Naive thymus-derived CD8-positive, alpha-beta T cell (primary cell): ENCODE measurements at regions of chr15 and their contacts with region 1.

Region 1: DNA sequence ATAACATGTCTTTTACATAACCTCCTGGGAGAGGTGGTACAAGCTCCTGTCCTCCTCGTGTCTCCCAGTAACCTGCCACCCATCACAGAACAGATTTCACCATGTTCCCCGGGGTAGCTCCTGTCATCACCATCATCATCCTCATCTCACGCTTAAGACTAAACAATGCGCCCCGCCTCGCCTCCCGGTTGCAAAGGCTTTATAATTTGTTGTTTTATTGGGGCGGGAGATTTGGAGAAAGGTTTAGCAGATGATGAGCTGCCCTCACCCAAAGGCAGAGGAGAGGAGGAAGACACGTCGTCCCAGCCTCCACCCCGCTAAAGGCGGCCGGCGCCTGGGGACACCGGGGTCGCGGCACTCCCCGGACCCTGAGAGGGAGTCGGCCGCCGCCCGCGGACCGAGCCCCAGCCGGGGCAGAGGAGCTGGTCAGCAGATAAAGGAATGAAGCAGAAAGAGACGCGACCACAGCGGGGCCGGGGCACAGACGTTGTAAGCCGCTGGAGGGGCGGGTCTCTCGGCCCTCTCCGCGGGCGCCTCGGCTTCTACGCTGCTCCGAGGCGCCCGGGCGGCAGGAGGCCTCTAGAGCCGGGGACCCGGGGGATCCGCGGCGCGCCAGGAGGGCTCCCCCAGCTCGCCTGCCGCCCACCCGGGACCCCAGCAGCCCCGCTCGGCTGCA is 589 bp downstream of the HERC1 start:
- DNase-seq: peak; percentile 6 to 61 (median 30)
- ATAC-seq: peak; percentile 42 to 51
- H3K4me3 Mint-ChIP-seq: peak overlapping the region; percentile 91 to 99 (median 94)
- H3K27ac Mint-ChIP-seq: peak overlapping the region; percentile 83 to 99 (median 97)
- H3K4me1 Mint-ChIP-seq: peaks cover 30 to 63% (median 54%) of the 10 kb centered on the region in 4 donors
- H3K27me3 Mint-ChIP-seq: peaks cover 0 to 2% (median 0%) of the 10 kb centered on the region in 5 donors

Region 2: DNA sequence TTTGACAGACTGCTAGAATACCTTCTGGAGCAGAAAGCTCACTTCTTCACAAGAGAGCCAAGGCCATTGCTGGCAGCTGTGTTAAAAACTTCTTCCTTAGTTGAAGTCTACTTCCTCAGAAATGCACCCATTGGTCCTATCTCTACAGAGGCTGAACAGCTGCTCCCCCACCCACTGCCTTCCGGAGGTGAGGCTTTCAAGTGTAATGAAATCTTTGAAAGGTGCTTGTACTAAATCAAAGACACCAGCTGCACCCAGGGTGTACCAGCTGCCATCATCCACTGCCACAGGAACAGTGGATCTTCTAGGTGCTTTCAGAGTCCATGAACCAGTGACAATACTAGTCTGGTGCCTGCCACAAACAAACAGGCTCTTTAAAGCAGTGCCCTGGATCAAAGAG is 27.0 kb after region 1 on chr15:
- POLR2A ChIA-PET with region 1: interaction called, 40 read pairs
- DNase-seq: peak; percentile 32 to 86 (median 67)
- ATAC-seq: peak; percentile 96 to 97
- H3K4me3 Mint-ChIP-seq: peak overlapping the region; percentile 25 to 88 (median 73)
- H3K27ac Mint-ChIP-seq: peak overlapping the region; percentile 85 to 98 (median 97)
- H3K4me1 Mint-ChIP-seq: peaks cover 43 to 68% (median 63%) of the 10 kb centered on the region in 4 donors
- H3K27me3 Mint-ChIP-seq: no peaks in the 10 kb centered on the region

Region 3: DNA sequence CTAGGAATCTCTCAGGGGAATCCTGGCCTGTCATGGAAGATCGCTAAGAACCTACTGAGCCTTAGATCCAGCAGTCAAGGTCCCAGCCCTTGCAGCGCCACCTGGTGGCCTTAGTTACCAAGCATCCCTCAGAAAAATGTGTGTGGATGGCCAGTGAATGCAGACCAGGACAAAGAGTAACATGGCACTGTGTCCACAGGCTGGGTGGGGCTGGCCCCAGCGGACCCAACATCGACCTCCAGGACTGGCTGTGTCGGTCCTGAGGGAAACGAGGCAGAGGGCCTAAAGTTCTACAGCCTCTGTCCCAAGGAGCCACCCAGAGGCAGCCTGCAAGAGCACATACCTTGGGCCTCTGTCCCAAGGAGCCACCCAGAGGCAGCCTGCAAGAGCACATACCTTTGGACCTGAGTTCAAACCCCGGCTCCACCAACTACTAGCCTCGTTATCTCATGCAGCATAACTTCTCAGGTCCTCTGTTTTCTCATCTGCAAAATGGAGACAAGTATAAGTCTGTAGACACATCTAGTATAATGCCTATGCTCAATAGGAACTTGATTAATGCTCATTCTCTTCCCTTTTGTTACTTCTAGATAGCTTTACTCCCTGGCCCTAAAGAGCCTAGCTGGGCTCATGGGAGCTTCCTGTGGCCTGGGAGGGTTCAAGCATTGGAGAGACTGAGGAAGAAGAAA is 58.1 kb after region 1 on chr15:
- POLR2A ChIA-PET with region 1: interaction called, 12 read pairs
- DNase-seq: peak; percentile 37 to 78 (median 64)
- ATAC-seq: no peak
- H3K4me3 Mint-ChIP-seq: peak overlapping the region in 6 of 10 donors; percentile 15 to 73 (median 53)
- H3K27ac Mint-ChIP-seq: peak overlapping the region; percentile 83 to 97 (median 95)
- H3K4me1 Mint-ChIP-seq: peaks cover 40 to 80% (median 74%) of the 10 kb centered on the region in 4 donors
- H3K27me3 Mint-ChIP-seq: no peaks in the 10 kb centered on the region

Region 4: GRCh38 chr15:64010719-64011118 is 177.6 kb after region 1 on chr15:
- POLR2A ChIA-PET with region 1: interaction called, 21 read pairs
- DNase-seq: peak; percentile 57 to 96 (median 87)
- ATAC-seq: peak; percentile 94 to 99
- H3K4me3 Mint-ChIP-seq: peak overlapping the region; percentile 43 to 83 (median 74)
- H3K27ac Mint-ChIP-seq: peak overlapping the region; percentile 95 to 99 (median 98)
- H3K4me1 Mint-ChIP-seq: peaks cover 17 to 70% (median 34%) of the 10 kb centered on the region in 4 donors
- H3K27me3 Mint-ChIP-seq: no peaks in the 10 kb centered on the region